Heart right ventricle (tissue), 16 donors: ENCODE measurements at regions of chr7 and their contacts with region 1.

Region 1: GRCh38 chr7:150448789-150449147 is 1.7 kb upstream of the GIMAP8 start:
- DNase-seq: peak; percentile 76 to 84
- ATAC-seq: peak in 7 of 8 donors; percentile 42 to 64 (median 59)
- H3K4me3 ChIP-seq: peak overlapping the region in 4 of 10 donors; percentile 3 to 67 (median 36)
- H3K27ac ChIP-seq: peak overlapping the region in 9 of 10 donors; percentile 73 to 95 (median 90)
- H3K4me1 ChIP-seq: peaks cover 0 to 54% (median 32%) of the 10 kb centered on the region in 9 donors
- H3K27me3 ChIP-seq: no peaks in the 10 kb centered on the region
- CTCF ChIP-seq: peak; percentile 83 to 95 (median 91)

Region 2: GRCh38 chr7:150428671-150429451 is 19.9 kb before region 1 on chr7:
- intact Hi-C with region 1: no loop called
- DNase-seq: no peak
- ATAC-seq: peak in 4 of 8 donors; percentile 11 to 39 (median 32)
- H3K4me3 ChIP-seq: no peak overlapping the region
- H3K27ac ChIP-seq: peak overlapping the region in 1 of 10 donors; percentile 40
- H3K4me1 ChIP-seq: peaks cover 0 to 20% (median 3%) of the 10 kb centered on the region in 9 donors
- H3K27me3 ChIP-seq: peaks cover 0 to 21% (median 4%) of the 10 kb centered on the region in 7 donors
- CTCF ChIP-seq: no peak

Region 3: DNA sequence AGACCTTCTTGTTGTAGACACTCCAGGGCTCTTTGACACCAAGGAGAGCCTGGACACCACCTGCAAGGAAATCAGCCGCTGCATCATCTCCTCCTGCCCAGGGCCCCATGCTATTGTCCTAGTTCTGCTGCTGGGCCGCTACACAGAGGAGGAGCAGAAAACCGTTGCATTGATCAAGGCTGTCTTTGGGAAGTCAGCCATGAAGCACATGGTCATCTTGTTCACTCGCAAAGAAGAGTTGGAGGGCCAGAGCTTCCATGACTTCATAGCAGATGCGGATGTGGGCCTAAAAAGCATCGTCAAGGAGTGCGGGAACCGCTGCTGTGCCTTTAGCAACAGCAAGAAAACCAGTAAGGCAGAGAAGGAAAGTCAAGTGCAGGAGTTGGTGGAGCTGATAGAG is 71.4 kb after region 1 on chr7:
- intact Hi-C with region 1: loop called in 6 of 10 experiments (anchors 2 to 5 kb)
- DNase-seq: no peak
- ATAC-seq: peak in 2 of 8 donors; percentile 47 to 52
- H3K4me3 ChIP-seq: peak overlapping the region in 9 of 10 donors; percentile 9 to 68 (median 57)
- H3K27ac ChIP-seq: peak overlapping the region; percentile 27 to 95 (median 80)
- H3K4me1 ChIP-seq: peaks cover 0 to 10% (median 0%) of the 10 kb centered on the region in 9 donors
- H3K27me3 ChIP-seq: no peaks in the 10 kb centered on the region
- CTCF ChIP-seq: no peak

Region 4: DNA sequence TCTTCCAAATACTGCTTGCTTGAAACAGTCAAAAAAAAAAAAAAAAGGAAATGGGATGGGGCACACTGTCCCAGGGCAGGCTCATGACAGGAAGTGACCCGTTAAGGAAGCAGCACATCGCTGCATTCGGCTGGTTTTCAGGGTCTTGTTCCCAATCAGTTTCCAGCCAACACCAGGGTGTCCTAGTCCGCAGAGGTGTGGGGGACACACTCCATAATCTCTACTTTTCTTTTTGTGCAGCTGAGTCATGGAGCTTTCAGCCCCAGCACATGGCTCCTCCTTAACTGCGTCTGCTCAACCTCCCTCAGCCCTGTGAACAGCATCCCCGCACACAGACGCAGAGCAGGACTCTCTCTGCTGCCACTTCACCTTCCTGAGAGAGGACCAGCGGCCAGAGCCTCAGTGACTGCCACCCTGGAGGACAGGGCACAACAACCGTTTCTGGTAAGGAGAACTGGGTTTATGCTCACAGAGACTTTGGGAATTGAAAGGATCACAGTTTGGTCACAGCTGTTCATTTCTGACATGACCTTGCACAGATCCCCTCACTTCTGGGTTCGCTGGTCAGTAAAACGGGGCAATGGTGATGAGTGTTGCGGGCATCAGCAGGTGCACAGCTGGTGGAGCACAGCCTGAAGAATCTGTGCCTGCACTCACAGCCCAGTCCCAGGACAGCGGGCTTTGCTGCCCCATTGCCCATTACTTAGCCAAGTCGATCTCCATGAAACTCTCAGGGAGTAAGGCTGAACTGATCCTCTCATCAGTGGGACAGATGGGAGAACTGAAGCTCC is 288.7 kb after region 1 on chr7 and contains the start of gene GIMAP5:
- intact Hi-C with region 1: loop called in 5 of 10 experiments (anchors 5 kb)
- DNase-seq: no peak
- ATAC-seq: peak; percentile 58 to 78 (median 74)
- H3K4me3 ChIP-seq: peak within 1 kb of the TSS; percentile 8 to 68 (median 60)
- H3K27ac ChIP-seq: peak within 1 kb of the TSS; percentile 66 to 93 (median 88)
- H3K4me1 ChIP-seq: peaks cover 0 to 39% (median 30%) of the 10 kb centered on the region in 9 donors
- H3K27me3 ChIP-seq: no peaks in the 10 kb centered on the region
- CTCF ChIP-seq: no peak
- total RNA-seq, gene GIMAP5: 6.5 to 27.2 (median 11.8) TPM

Region 5: GRCh38 chr7:150753826-150754603 is 305.2 kb after region 1 on chr7:
- intact Hi-C with region 1: loop called (anchors 1 to 5 kb)
- DNase-seq: peak in 1 of 2 donors; percentile 43
- ATAC-seq: peak; percentile 36 to 67 (median 54)
- H3K4me3 ChIP-seq: no peak overlapping the region
- H3K27ac ChIP-seq: peak overlapping the region in 9 of 10 donors; percentile 25 to 87 (median 83)
- H3K4me1 ChIP-seq: peaks cover 20 to 68% (median 51%) of the 10 kb centered on the region in 9 donors
- H3K27me3 ChIP-seq: no peaks in the 10 kb centered on the region
- CTCF ChIP-seq: peak in 7 of 9 donors; percentile 8 to 62 (median 50)